Endothelial cell of umbilical vein (primary cell): ENCODE measurements at regions of chr6 and their contacts with region 1.

Region 1: GRCh38 chr6:158704181-158704822 is 54.4 kb downstream of the SYTL3 start:
- DNase-seq: peak; percentile 63
- H3K4me3 ChIP-seq: peak overlapping the region in 2 of 3 experiments; percentile 11 to 20
- H3K27ac ChIP-seq: no peak overlapping the region
- H3K4me1 ChIP-seq: peaks cover 23% of the 10 kb centered on the region
- H3K27me3 ChIP-seq: no peaks in the 10 kb centered on the region
- CTCF ChIP-seq: peak; percentile 98 to 99
- POLR2A ChIP-seq: no peak

Region 2: GRCh38 chr6:158686791-158687381 is 17.4 kb before region 1 on chr6:
- CTCF ChIA-PET with region 1: interaction called, 24 read pairs
- POLR2A ChIA-PET with region 1: no interaction called
- dilution Hi-C with region 1: no loop called
- intact Hi-C with region 1: no loop called
- DNase-seq: no peak
- H3K4me3 ChIP-seq: no peak overlapping the region
- H3K27ac ChIP-seq: no peak overlapping the region
- H3K4me1 ChIP-seq: peaks cover 3% of the 10 kb centered on the region
- H3K27me3 ChIP-seq: peaks cover 0 to 2% of the 10 kb centered on the region in 2 experiments
- CTCF ChIP-seq: no peak
- POLR2A ChIP-seq: no peak

Region 3: DNA sequence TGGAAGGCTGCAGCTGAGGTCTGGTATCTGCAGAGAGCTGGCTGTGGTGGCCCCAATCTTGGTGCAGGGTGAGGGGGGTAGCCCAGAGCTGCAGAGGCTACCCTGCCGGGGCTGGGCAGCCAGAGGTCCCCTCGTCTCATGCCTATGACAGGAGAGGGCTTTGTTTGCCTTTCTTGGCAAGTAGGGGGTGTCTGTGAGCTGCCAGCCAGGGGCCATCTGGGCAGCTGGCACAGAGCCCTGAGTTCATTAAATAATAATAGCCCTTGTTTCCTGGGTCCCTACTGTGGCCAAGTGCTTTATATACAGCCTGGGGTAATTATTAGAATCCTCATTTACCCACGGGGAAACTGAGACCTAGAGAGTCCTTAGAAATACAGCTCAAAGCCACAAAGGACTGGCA is 48.3 kb after region 1 on chr6:
- CTCF ChIA-PET with region 1: interaction called, 7 read pairs
- POLR2A ChIA-PET with region 1: no interaction called
- dilution Hi-C with region 1: no loop called
- intact Hi-C with region 1: loop called (anchors 2 kb)
- DNase-seq: no peak
- H3K4me3 ChIP-seq: no peak overlapping the region
- H3K27ac ChIP-seq: no peak overlapping the region
- H3K4me1 ChIP-seq: peaks cover 7% of the 10 kb centered on the region
- H3K27me3 ChIP-seq: no peaks in the 10 kb centered on the region
- CTCF ChIP-seq: no peak
- POLR2A ChIP-seq: no peak

Region 4: DNA sequence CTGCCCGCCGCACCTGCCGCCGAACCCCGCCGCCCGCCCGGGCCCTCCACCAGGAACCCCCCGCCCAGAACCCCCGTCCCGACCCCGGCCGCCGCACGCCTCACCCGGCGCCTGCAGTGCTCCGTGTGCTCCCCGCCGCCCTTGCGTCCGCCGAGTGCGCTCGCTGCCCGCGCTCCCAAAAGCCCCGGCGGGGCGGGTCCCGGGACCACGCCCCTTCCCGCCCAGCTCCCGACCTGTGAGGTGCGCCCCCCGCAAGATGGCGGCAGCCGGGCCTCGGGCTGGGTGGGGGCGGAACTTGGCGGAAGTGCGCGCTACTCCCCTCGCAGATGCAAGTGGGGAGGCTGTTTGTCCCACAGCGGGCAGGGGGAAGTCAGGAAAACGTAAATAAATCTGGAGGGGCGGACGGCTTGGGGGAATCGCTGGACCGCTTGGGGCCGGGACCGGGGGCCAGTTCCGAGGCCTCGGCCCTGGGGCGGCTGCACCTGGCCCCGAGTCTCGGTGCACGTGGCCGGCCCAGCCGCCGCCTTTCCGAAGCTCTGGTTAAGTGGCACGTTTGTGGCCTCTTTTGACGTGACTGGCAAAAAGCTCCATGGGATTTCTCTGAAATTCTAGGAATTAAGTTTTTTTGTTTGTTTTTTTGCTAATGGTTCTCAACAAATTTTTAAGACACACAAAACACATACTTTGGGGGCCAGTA is 115.1 kb after region 1 on chr6 and contains the start of gene EZR:
- CTCF ChIA-PET with region 1: interaction called, 3 read pairs
- POLR2A ChIA-PET with region 1: no interaction called
- dilution Hi-C with region 1: no loop called
- intact Hi-C with region 1: loop called (anchors 1 kb)
- DNase-seq: peak; percentile 58
- H3K4me3 ChIP-seq: peak within 1 kb of the TSS; percentile 84 to 98 (median 87)
- H3K27ac ChIP-seq: peak within 1 kb of the TSS; percentile 48
- H3K4me1 ChIP-seq: peaks cover 16% of the 10 kb centered on the region
- H3K27me3 ChIP-seq: no peaks in the 10 kb centered on the region
- CTCF ChIP-seq: no peak
- POLR2A ChIP-seq: no peak
- total RNA-seq, gene EZR: 105 and 108 TPM in 2 replicates

Region 5: DNA sequence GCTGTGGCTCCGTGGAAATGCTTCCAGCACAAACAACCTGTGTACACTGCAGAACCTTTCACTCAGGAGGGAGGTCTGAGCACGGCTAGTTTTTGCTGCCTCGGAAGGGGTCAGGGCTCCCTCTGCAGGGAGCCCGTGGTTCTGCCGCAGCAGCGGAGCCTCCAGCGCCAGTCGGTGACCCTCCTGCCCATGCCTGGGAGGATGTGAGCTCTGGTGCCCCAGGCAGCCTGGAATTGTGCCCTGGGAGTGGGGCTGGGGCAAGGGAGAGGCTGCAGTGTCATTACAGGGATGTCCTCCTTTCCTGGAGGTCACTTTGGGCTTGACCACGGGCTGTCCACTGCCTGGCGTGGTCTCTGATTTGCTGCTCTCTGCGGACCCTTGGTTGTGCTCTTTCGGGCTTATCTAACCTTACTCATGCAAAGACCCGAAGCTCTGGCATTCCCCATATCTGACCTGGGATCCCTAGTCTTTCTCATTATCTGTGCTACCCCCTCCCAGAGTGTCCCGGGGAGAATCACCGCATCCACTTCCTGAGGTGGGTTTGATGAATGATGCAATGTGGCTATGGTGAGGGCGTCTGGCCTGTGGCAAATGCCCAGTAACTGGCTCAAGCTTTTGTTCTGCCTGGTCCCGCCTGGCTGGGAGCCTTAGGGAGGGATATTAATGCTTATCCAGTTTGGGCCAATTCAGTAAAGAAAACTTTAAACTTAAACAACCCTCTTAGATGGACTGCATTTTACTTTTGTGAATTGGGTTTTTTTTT is 400.0 kb after region 1 on chr6:
- CTCF ChIA-PET with region 1: interaction called, 3 read pairs
- POLR2A ChIA-PET with region 1: no interaction called
- dilution Hi-C with region 1: no loop called
- intact Hi-C with region 1: loop called (anchors 2 kb)
- DNase-seq: peak; percentile 40
- H3K4me3 ChIP-seq: no peak overlapping the region
- H3K27ac ChIP-seq: no peak overlapping the region
- H3K4me1 ChIP-seq: no peaks in the 10 kb centered on the region
- H3K27me3 ChIP-seq: peaks cover 0 to 2% of the 10 kb centered on the region in 2 experiments
- CTCF ChIP-seq: peak; percentile 77 to 96
- POLR2A ChIP-seq: no peak